K562 (cell line): ENCODE measurements at regions of chr6 and their contacts with region 1.

Region 1: GRCh38 chr6:125779924-125780539 is 10.7 kb upstream of the NCOA7 start:
- DNase-seq: peak; percentile 87 to 94 (median 89)
- ATAC-seq: peak; percentile 79
- H3K4me3 ChIP-seq: peak overlapping the region; percentile 47
- H3K27ac ChIP-seq: peak overlapping the region; percentile 98
- H3K4me1 ChIP-seq: no peaks in the 10 kb centered on the region; a peak in 2 of 5 replicates
- H3K27me3 ChIP-seq: no peaks in the 10 kb centered on the region
- CTCF ChIP-seq: peak in 2 of 3 experiments; percentile 27 to 34; a peak in 2 of 6 replicates
- EP300 ChIP-seq: peak; percentile 79
- POLR2A ChIP-seq: no peak
- RAD21 ChIP-seq: 0 out of 4 replicates have a peak, but pooled peaks of 1 of the 2 experiments have one; percentile 9

Region 2: GRCh38 chr6:124961777-124962611 is 818.0 kb before region 1 on chr6 and contains the start of gene RNF217:
- CTCF ChIA-PET with region 1: no interaction called
- POLR2A ChIA-PET with region 1: no interaction called
- in situ Hi-C with region 1: no loop called
- intact Hi-C with region 1: loop called (anchors 10 kb)
- DNase-seq: peak; percentile 82 to 86 (median 84)
- ATAC-seq: peak; percentile 74
- H3K4me3 ChIP-seq: peak within 1 kb of the TSS; percentile 75
- H3K27ac ChIP-seq: peak within 1 kb of the TSS; percentile 84
- H3K4me1 ChIP-seq: peaks cover 16 to 23% of the 10 kb centered on the region in 2 experiments
- H3K27me3 ChIP-seq: no peaks in the 10 kb centered on the region
- CTCF ChIP-seq: peak in 2 of 3 experiments; percentile 19 to 41; a peak in 3 of 6 replicates
- EP300 ChIP-seq: no peak
- POLR2A ChIP-seq: peak; percentile 68
- RAD21 ChIP-seq: no peak
- polyA plus RNA-seq, gene RNF217: 2.9 to 4.0 TPM

Region 3: GRCh38 chr6:125906158-125906998 is 126.3 kb after region 1 on chr6:
- CTCF ChIA-PET with region 1: no interaction called
- POLR2A ChIA-PET with region 1: no interaction called
- in situ Hi-C with region 1: no loop called
- intact Hi-C with region 1: loop called (anchors 5 kb)
- DNase-seq: peak; percentile 70 to 80 (median 76)
- ATAC-seq: peak; percentile 91
- H3K4me3 ChIP-seq: no peak overlapping the region
- H3K27ac ChIP-seq: no peak overlapping the region
- H3K4me1 ChIP-seq: peaks cover 5 to 6% of the 10 kb centered on the region in 2 experiments; a peak in 3 of 5 replicates
- H3K27me3 ChIP-seq: no peaks in the 10 kb centered on the region
- CTCF ChIP-seq: peak; percentile 79 to 92 (median 84)
- EP300 ChIP-seq: no peak
- POLR2A ChIP-seq: no peak
- RAD21 ChIP-seq: peak; percentile 57 to 66

Region 4: GRCh38 chr6:125986300-125987025 is 206.4 kb after region 1 on chr6 and contains the start of gene TRMT11:
- CTCF ChIA-PET with region 1: no interaction called
- POLR2A ChIA-PET with region 1: interaction called, 16 read pairs
- in situ Hi-C with region 1: no loop called
- intact Hi-C with region 1: loop called (anchors 1 kb)
- DNase-seq: peak; percentile 93 to 97 (median 95)
- ATAC-seq: peak; percentile 95
- H3K4me3 ChIP-seq: peak within 1 kb of the TSS; percentile 62
- H3K27ac ChIP-seq: peak within 1 kb of the TSS; percentile 79
- H3K4me1 ChIP-seq: peaks cover 14 to 30% of the 10 kb centered on the region in 2 experiments
- H3K27me3 ChIP-seq: no peaks in the 10 kb centered on the region
- CTCF ChIP-seq: 0 out of 6 replicates have a peak, but pooled peaks of 1 of the 3 experiments have one; percentile 6
- EP300 ChIP-seq: no peak
- POLR2A ChIP-seq: peak; percentile 97
- RAD21 ChIP-seq: no peak
- polyA plus RNA-seq, gene TRMT11: 72.4 to 76.3 TPM

Region 5: DNA sequence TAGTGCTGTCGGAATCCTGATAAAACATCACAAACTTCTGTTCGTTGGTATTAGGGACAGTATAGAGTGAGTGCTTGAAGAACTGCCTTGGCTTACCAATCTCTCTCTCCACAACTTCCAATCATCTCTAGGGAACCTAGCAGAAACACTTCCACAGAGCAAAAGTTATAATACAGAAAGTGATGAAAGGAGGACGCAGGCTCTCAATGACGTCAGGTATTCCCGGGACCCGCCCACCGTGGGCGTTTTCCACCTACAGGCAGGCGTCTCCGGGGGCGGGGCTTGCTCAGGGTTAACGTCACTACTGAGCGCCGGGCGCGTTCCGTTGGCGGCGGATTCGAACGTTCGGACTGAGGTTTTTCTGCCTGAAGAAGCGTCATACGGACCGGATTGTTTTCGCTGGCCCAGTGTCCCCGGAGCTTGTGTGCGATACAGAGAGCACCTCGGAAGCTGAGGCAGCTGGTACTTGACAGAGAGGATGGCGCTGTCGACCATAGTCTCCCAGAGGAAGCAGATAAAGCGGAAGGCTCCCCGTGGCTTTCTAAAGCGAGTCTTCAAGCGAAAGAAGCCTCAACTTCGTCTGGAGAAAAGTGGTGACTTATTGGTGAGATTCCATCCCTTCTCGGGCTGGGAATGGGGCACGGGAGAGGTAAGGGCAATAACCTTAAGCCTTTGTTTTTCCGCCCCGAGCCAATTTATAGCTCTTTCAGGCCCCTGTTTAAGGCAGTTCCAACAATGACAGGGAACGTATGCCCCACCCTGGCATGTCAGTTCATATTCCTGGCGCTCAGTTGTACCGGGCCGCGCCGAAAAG is 560.0 kb after region 1 on chr6 and contains the start of gene CENPW:
- CTCF ChIA-PET with region 1: no interaction called
- POLR2A ChIA-PET with region 1: no interaction called
- in situ Hi-C with region 1: no loop called
- intact Hi-C with region 1: loop called (anchors 5 kb)
- DNase-seq: peak; percentile 95 to 97 (median 97)
- ATAC-seq: peak; percentile 87
- H3K4me3 ChIP-seq: peak within 1 kb of the TSS; percentile 87
- H3K27ac ChIP-seq: peak within 1 kb of the TSS; percentile 89
- H3K4me1 ChIP-seq: peaks cover 0 to 8% of the 10 kb centered on the region in 2 experiments; a peak in 2 of 5 replicates
- H3K27me3 ChIP-seq: no peaks in the 10 kb centered on the region
- CTCF ChIP-seq: no peak
- EP300 ChIP-seq: peak; percentile 49; the same call in 1 of the 2 replicates
- POLR2A ChIP-seq: peak; percentile 85
- RAD21 ChIP-seq: no peak
- polyA plus RNA-seq, gene CENPW: 240 to 285 TPM